Endothelial cell of umbilical vein (primary cell): ENCODE measurements at regions of chr10 and their contacts with region 1.

Region 1: GRCh38 chr10:102904346-102904745 is 13.7 kb upstream of the CNNM2 start:
- DNase-seq: no peak
- H3K4me3 ChIP-seq: no peak overlapping the region
- H3K27ac ChIP-seq: no peak overlapping the region
- H3K4me1 ChIP-seq: no peaks in the 10 kb centered on the region
- H3K27me3 ChIP-seq: no peaks in the 10 kb centered on the region
- CTCF ChIP-seq: no peak
- POLR2A ChIP-seq: no peak

Region 2: DNA sequence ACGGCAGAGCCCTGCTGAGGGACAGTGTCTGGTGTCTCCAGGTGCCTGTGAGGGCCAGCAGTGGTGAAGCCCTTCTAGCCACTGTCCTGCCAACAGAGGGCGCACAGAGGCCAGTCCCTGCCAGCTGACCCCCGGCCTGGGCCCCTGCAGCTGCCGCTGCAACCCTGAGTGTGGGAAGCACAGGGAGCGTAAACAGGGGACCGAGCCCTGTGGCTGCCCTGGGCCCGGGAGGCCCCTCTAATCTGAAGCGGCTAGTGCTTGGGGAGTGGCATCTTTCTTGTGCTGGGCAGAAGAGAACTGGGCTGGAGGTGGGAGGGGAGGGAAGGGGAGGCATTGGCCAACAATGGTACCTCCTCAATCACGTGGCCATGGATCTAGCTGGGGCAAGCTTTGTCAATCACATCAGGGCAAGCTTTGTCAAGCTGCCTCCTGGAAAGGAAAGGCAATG is 225.5 kb before region 1 on chr10:
- CTCF ChIA-PET with region 1: interaction called, 38 read pairs
- POLR2A ChIA-PET with region 1: no interaction called
- dilution Hi-C with region 1: no loop called
- intact Hi-C with region 1: loop called (anchors 1 kb)
- DNase-seq: peak; percentile 68
- H3K4me3 ChIP-seq: no peak overlapping the region
- H3K27ac ChIP-seq: no peak overlapping the region
- H3K4me1 ChIP-seq: peaks cover under 1% of the 10 kb centered on the region
- H3K27me3 ChIP-seq: no peaks in the 10 kb centered on the region
- CTCF ChIP-seq: peak; percentile 77 to 94
- POLR2A ChIP-seq: no peak

Region 3: DNA sequence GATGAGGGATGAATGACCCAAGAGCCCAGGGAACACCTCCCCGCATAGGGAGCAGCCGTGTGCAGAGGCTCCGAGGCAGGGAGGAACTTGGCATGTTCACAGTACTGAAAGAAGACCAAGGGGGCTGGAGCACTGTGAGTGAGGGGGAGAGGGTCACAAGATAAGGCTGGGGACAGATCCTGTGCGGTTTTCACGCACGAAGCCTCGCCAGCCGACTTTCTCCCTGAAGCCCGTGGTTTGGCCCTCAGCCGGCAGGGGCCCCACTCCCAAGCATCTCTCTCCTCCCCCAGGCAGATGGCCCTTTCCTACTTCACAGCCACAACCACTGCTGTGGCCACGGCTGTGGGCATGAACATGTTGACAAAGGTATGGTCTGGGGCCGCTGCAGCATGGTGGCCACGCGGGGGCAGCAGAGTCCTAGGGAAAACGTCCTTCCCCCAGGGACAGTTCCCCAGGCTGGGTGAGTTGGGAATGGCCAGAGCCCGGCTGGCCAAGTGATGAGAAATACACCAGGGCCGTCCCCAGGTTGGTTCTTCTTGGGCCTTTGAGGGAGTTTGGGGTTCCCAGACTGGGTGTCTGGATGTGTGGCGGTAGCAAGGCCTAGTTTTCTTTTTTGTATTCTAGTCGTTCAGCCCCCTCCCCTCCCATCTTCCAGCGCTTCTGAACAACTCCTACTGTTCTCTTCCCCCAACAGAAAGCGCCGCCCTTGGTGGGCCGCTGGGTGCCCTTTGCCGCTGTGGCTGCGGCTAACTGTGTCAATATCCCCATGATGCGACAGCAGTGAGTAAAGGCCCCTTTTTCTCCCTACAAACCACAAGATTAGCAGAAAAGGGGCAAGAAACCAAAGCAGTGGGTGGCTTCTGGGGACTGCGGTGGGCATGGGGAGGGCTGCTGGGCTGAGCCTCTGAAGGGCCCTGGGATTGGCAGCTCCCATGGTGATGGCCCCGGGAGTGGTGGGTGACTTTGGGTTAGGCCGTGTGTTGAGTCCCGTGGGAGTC is 175.0 kb before region 1 on chr10:
- CTCF ChIA-PET with region 1: interaction called, 62 read pairs
- POLR2A ChIA-PET with region 1: no interaction called
- dilution Hi-C with region 1: no loop called
- intact Hi-C with region 1: loop called (anchors 1 kb)
- DNase-seq: peak; percentile 78
- H3K4me3 ChIP-seq: no peak overlapping the region
- H3K27ac ChIP-seq: no peak overlapping the region
- H3K4me1 ChIP-seq: no peaks in the 10 kb centered on the region
- H3K27me3 ChIP-seq: no peaks in the 10 kb centered on the region
- CTCF ChIP-seq: peak; percentile 90 to 92
- POLR2A ChIP-seq: no peak

Region 4: GRCh38 chr10:102752934-102753664 is 151.2 kb before region 1 on chr10:
- CTCF ChIA-PET with region 1: interaction called, 51 read pairs
- POLR2A ChIA-PET with region 1: no interaction called
- dilution Hi-C with region 1: no loop called
- intact Hi-C with region 1: no loop called
- DNase-seq: peak; percentile 87
- H3K4me3 ChIP-seq: no peak overlapping the region
- H3K27ac ChIP-seq: peak overlapping the region; percentile 24
- H3K4me1 ChIP-seq: peaks cover 7% of the 10 kb centered on the region
- H3K27me3 ChIP-seq: no peaks in the 10 kb centered on the region
- CTCF ChIP-seq: peak; percentile 65 to 70
- POLR2A ChIP-seq: no peak

Region 5: DNA sequence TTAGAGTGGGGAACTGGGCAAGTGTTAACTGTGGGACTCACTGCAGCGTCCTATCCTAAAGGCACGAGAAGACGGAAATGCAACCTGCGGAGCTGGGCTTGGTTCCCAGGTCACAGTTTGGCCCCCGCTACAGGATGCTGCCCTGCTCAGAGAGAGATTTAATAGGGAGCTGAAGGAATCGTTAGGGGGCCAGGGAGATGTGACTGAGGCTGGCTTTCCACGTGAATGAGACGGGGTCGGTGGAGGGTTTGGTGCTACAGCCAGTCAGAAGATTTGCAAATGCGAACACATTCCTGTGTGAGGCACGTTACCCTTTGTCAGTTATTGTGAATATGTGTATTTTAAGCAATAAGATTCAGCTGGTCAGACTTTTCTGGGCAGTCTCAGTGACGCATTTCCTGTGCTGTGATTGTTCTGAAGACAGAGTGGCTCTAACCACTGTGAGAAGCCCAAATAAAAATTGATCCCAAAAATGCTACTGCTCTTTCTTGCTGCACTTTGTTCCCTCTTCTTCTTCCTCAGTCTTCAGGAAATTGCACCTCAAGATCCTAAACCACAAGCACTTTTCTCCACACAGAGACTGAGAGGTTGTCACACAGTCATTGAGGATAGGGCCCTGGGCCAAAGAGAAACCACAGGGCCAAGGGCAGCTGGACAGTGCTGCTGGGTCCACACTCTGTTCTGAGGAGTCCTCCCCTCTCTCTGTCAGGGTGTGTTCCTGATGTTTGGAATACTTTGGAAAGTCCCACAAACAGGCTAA is 88.4 kb before region 1 on chr10:
- CTCF ChIA-PET with region 1: interaction called, 10 read pairs
- POLR2A ChIA-PET with region 1: no interaction called
- dilution Hi-C with region 1: no loop called
- intact Hi-C with region 1: no loop called
- DNase-seq: peak; percentile 92
- H3K4me3 ChIP-seq: no peak overlapping the region
- H3K27ac ChIP-seq: peak overlapping the region; percentile 99
- H3K4me1 ChIP-seq: peaks cover 42% of the 10 kb centered on the region
- H3K27me3 ChIP-seq: no peaks in the 10 kb centered on the region
- CTCF ChIP-seq: no peak
- POLR2A ChIP-seq: no peak

Region 6: DNA sequence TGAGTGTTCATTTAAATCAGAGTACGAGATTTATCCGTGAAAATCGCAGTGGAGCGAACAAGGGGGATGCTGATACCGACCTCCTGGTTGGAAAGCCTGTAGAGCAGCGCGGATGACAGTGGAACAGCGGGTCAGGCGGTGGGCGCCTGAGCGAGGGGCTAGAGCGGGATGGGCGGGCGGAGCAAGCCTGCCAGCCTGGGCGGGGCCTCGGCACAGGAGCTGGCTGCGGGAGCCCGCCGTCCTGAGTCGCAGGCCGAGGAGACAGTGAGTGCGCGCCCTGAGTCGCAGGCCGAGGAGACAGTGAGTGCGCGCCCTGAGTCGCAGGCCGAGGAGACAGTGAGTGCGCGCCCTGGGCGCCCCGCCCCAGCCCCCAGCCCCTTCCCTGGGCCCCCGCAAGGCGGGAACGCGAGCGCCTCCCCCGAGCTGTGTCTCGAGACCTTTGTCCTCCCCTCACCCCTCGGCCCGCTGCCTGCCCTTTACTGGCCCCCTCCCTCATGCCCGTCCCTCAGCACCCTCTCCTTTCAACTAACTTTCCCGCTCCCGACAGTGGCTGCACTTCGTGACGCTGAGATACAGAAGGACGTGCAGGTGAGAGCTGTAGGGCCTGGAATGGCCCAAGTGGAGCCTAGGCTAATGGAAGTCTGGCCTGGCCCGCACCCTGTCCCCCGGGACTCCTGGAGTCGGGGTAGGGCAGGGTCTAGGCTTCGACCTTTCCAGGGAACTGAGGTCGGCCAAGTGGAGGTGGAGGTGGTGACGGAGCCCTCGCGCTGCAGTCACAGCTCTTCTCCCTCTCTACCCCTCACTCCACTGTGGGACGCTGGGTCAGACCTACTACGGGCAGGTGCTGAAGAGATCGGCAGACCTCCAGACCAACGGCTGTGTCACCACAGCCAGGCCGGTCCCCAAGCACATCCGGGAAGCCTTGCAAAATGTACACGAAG is 34.8 kb before region 1 on chr10 and contains the start of gene AS3MT:
- CTCF ChIA-PET with region 1: interaction called, 20 read pairs
- POLR2A ChIA-PET with region 1: no interaction called
- dilution Hi-C with region 1: no loop called
- intact Hi-C with region 1: no loop called
- DNase-seq: peak; percentile 22
- H3K4me3 ChIP-seq: peak within 1 kb of the TSS in 2 of 3 experiments; percentile 42 to 53
- H3K27ac ChIP-seq: no peak within 1 kb of the TSS
- H3K4me1 ChIP-seq: peaks cover 5% of the 10 kb centered on the region
- H3K27me3 ChIP-seq: peaks cover 2 to 5% of the 10 kb centered on the region in 2 experiments
- CTCF ChIP-seq: no peak
- POLR2A ChIP-seq: no peak
- total RNA-seq, gene AS3MT: 0.95 TPM in 1 of 2 replicates, not detected in the other

Region 7: DNA sequence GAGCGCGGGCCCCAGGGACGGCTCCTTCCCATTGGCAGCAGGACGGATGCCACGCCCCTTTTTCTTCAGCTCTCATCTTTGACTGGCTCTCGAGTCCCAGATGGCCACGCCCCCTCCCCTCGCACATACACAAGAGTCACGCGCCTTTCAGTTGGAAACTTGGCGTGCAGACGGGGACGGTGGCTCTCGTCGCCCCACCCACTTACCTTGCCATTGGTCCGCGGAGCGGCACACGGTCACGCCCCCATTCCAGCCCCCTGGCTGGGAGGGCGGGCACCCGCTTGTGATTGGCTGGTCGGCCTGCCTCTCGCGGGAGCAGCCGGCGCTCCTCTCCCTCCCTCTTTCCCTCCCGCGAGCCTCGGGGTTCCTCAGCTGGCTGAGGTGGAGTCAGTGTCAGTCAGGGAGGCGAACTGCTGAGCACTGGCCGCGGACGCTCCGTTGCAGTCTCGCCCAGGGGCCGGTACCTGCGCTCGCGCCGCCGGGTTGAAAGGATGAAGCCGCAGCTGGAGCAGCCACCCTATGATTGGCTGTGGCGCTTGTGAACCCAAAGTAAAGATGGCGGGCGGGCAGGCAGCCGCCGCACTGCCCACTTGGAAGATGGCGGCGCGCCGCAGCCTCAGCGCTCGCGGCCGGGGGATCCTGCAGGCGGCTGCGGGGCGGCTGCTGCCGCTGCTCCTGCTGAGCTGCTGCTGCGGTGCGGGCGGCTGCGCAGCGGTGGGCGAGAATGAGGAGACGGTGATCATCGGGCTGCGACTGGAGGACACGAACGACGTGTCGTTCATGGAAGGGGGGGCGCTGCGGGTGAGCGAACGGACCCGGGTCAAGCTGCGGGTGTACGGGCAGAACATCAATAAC is 13.8 kb after region 1 on chr10 and contains the start of gene CNNM2:
- CTCF ChIA-PET with region 1: interaction called, 23 read pairs
- POLR2A ChIA-PET with region 1: no interaction called
- dilution Hi-C with region 1: no loop called
- intact Hi-C with region 1: no loop called
- DNase-seq: peak; percentile 100
- H3K4me3 ChIP-seq: peak within 1 kb of the TSS; percentile 43 to 76 (median 47)
- H3K27ac ChIP-seq: peak within 1 kb of the TSS; percentile 57
- H3K4me1 ChIP-seq: peaks cover 10% of the 10 kb centered on the region
- H3K27me3 ChIP-seq: peaks cover 13 to 15% of the 10 kb centered on the region in 2 experiments
- CTCF ChIP-seq: no peak
- POLR2A ChIP-seq: peak; percentile 59
- total RNA-seq, gene CNNM2: 3.0 and 3.2 TPM in 2 replicates